H1 (cell line): ENCODE measurements at regions of chr10 and their contacts with region 1.

Region 1: DNA sequence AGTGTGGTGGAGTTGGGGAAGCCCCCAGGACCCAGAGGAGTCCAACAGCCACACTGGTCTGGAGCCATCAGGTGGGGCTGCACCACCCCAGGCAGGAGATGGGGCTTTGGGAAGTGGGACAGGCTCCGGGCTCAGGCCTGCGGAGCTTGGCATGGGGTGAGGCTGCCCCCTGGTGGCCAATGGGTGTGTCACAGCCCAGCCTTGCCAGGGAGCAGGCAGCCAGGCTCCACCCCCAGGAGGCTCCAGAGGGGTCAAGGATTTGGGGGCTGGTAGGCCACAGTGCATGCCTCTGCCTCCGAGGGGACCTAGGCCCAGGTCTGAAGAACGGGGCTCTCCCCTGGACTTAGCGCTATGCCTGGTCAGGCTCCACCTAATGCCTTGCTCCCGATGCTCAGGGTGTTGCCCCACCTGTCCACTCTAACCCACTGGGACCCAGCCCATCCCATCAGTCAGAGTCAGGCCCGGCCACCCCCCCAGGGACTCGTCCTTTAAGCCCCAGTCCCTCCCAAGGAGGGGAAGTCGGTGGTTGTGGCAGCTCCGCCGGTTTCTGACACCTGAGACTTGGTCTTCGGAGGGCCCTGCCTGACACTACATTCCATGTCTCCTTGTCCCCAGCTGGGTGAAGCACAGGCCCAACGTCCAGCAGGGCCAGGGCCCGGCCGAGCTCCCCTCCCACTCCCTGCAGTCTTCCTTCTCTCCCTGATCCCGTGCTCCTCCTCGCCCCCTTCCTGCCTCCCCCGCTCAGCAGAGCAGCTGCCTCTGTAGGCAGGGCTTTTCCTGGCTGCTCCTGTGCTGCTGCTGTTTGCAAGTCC is 11.3 kb upstream of the SAMD8 start:
- DNase-seq: peak; percentile 77 to 99
- H3K4me3 ChIP-seq: peak overlapping the region in 2 of 4 experiments; percentile 10 to 25; a peak in 2 of 8 replicates
- H3K27ac ChIP-seq: peak overlapping the region; percentile 59; the same call in 1 of the 2 replicates
- H3K4me1 ChIP-seq: peaks cover 0 to 13% (median 8%) of the 10 kb centered on the region in 4 experiments; a peak in 5 of 7 replicates
- H3K27me3 ChIP-seq: no peaks in the 10 kb centered on the region
- CTCF ChIP-seq: peak; percentile 94 to 98 (median 96)
- EP300 ChIP-seq: no peak
- POLR2A ChIP-seq: peak in 1 of 2 experiments; percentile 62; a peak in 2 of 3 replicates
- RAD21 ChIP-seq: peak; percentile 98 to 99

Region 2: DNA sequence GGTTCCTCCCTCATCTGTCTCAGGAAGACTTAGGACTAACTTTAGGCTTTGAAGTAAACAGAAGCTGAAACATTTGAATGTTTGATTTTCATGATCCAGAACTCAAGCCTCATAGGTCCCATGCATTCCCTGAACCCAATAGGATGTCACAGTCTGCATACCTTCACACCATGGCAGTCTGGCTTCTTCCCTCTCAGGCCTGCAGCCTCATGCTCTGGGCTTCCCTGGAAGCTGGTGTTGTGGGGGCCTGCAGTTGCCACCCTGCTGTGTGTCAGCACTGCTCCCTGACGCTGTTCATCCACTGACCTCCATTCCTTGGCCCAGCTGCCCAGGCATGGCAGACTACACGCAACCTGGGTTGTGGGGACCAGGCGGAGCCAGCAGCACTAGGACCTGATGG is 541.3 kb before region 1 on chr10:
- CTCF ChIA-PET with region 1: no interaction called
- POLR2A ChIA-PET with region 1: no interaction called
- DNase-seq: no peak
- H3K4me3 ChIP-seq: no peak overlapping the region
- H3K27ac ChIP-seq: no peak overlapping the region
- H3K4me1 ChIP-seq: no peaks in the 10 kb centered on the region
- H3K27me3 ChIP-seq: no peaks in the 10 kb centered on the region
- CTCF ChIP-seq: no peak
- EP300 ChIP-seq: no peak
- POLR2A ChIP-seq: no peak
- RAD21 ChIP-seq: no peak

Region 3: DNA sequence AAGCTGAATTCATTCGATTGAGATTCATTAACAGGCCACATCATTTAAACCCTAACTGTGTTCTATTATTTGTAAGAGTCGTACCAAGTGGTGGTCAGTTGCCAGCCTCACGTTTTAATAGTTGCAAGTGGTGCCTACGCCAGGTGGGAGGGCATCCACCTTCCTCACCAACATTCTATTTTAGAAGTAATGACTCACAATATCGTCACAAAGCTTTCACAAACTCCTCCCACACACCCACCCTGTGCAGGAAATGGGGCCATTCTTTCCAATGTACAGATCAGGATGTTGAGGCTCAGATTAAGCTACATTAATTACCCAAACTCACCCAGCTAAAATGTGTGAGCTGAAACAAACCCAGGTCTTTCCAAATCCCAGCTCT is 66.0 kb before region 1 on chr10:
- CTCF ChIA-PET with region 1: interaction called, 14 read pairs
- POLR2A ChIA-PET with region 1: interaction called, 3 read pairs
- DNase-seq: no peak
- H3K4me3 ChIP-seq: no peak overlapping the region
- H3K27ac ChIP-seq: no peak overlapping the region
- H3K4me1 ChIP-seq: no peaks in the 10 kb centered on the region
- H3K27me3 ChIP-seq: no peaks in the 10 kb centered on the region; a peak in 1 of 7 replicates
- CTCF ChIP-seq: no peak
- EP300 ChIP-seq: no peak
- POLR2A ChIP-seq: no peak
- RAD21 ChIP-seq: no peak

Region 4: GRCh38 chr10:75076367-75076766 is 23.8 kb before region 1 on chr10:
- CTCF ChIA-PET with region 1: interaction called, 12 read pairs
- POLR2A ChIA-PET with region 1: interaction called, 5 read pairs
- DNase-seq: no peak
- H3K4me3 ChIP-seq: no peak overlapping the region
- H3K27ac ChIP-seq: no peak overlapping the region
- H3K4me1 ChIP-seq: peaks cover 0 to 16% (median 6%) of the 10 kb centered on the region in 4 experiments; a peak in 4 of 7 replicates
- H3K27me3 ChIP-seq: no peaks in the 10 kb centered on the region
- CTCF ChIP-seq: no peak
- EP300 ChIP-seq: no peak
- POLR2A ChIP-seq: no peak
- RAD21 ChIP-seq: no peak

Region 5: DNA sequence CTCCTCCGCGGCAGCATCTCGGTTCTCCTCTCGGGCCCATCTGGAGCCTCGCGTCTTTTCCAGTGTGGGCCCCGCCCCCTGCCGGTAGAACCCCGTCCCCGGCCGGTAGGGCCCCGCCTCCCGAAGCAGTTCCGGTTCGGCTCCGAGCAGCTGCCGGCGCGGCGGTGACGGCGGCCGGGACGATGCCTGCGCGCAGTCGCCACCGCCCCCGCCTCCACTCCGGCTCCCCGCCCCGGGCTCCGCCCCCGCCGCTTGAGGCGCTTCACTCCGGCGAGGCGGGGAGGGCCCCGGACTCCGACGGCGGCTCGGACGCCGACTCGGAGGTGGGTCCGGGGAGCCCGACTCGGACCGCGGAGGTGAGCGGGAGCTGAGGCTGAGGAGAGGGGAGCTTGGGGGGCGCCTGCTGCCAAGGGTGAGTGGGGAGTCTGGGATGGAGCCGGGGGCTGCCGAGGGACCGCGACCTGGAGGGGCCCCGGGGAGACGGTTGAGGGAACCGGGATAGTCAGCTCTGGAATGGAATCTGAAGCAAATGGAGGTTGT is 11.3 kb after region 1 on chr10 and contains the start of gene SAMD8:
- CTCF ChIA-PET with region 1: interaction called, 28 read pairs
- POLR2A ChIA-PET with region 1: interaction called, 7 read pairs
- DNase-seq: peak; percentile 91 to 97
- H3K4me3 ChIP-seq: peak within 1 kb of the TSS; percentile 85 to 95 (median 89)
- H3K27ac ChIP-seq: peak within 1 kb of the TSS; percentile 69; the same call in 1 of the 2 replicates
- H3K4me1 ChIP-seq: peaks cover 0 to 9% (median 2%) of the 10 kb centered on the region in 4 experiments; a peak in 4 of 7 replicates
- H3K27me3 ChIP-seq: no peaks in the 10 kb centered on the region
- CTCF ChIP-seq: peak in 2 of 3 experiments; percentile 2 to 5; a peak in 2 of 4 replicates
- EP300 ChIP-seq: no peak
- POLR2A ChIP-seq: peak in 1 of 2 experiments; percentile 43; a peak in 1 of 3 replicates
- RAD21 ChIP-seq: no peak
- total RNA-seq, gene SAMD8: 16.6 and 20.9 TPM in 2 replicates